Cardiac septum (tissue), 1 donor: ENCODE measurements at regions of chr5 and their contacts with region 1.

Region 1: DNA sequence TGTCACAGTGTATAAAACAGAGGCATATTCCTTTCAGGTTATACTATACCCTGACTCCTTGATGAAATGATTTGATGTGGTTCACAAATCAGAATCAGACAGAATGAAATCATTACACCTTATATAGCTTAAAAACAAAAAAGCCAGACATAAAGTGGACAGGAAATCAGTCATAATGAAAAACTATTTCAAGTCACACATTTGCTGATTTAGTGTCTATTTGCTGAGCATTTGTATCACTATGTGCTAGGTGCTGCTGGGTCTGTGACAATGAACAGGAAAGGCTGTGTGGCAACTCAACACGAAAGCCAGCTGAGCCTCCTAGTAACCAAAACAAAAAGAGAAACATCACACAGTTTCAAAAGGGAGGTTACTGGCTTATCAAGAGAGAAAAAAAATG is 194.0 kb downstream of the EFNA5 start:
- DNase-seq: no peak

Region 2: DNA sequence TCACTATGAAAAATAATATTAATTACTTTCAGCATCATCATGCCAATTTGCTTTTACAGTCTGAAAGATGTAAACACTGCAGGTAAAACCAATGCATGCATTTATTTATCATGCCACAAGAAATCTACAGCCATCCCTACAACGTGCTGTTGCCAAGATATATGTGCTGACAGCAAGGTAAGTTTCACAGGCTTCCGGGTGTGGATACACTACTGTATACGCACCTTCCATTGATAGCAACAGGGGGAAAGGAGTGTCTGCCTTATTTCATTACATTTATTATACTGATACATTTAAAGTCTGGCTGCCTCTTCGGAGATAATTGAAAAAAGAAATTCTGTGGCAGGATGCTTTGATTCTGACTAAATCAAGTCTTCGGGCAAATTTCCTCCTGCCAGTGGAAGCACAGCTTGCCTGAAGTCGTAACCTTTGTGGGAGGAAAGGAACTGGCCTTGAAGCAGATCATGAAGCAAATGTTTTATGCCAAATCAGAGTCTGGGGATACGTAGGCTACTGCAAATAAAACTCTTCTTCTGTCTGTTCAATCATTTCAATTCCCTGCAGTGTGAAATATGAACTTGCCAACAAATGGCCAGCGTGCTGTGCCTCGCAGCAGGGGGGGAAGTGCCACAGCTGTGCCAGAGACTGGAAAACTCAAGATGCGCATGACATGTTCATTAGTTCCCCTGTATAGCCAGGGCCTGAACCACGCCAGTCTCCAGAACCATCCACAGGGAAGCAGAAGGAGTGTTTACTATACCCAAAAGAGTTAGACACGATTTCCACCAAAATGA is 74.2 kb before region 1 on chr5:
- intact Hi-C with region 1: loop called (anchors 5 kb)
- DNase-seq: no peak

Region 3: GRCh38 chr5:107431998-107432397 is 44.8 kb before region 1 on chr5:
- intact Hi-C with region 1: no loop called
- DNase-seq: no peak